ENCODE measurements at regions of chr6 and their contacts with region 1.

Region 1: GRCh38 chr6:18264219-18264922 is at the start of gene DEK:
- DNase-seq: peak; percentile 90
- H3K4me3 Mint-ChIP-seq: peak within 1 kb of the TSS; percentile 95
- H3K27ac Mint-ChIP-seq: peak within 1 kb of the TSS; percentile 96
- H3K4me1 Mint-ChIP-seq: peaks cover 49% of the 10 kb centered on the region
- H3K27me3 Mint-ChIP-seq: no peaks in the 10 kb centered on the region
- total RNA-seq, gene DEK: 180 to 182 TPM

Region 2: DNA sequence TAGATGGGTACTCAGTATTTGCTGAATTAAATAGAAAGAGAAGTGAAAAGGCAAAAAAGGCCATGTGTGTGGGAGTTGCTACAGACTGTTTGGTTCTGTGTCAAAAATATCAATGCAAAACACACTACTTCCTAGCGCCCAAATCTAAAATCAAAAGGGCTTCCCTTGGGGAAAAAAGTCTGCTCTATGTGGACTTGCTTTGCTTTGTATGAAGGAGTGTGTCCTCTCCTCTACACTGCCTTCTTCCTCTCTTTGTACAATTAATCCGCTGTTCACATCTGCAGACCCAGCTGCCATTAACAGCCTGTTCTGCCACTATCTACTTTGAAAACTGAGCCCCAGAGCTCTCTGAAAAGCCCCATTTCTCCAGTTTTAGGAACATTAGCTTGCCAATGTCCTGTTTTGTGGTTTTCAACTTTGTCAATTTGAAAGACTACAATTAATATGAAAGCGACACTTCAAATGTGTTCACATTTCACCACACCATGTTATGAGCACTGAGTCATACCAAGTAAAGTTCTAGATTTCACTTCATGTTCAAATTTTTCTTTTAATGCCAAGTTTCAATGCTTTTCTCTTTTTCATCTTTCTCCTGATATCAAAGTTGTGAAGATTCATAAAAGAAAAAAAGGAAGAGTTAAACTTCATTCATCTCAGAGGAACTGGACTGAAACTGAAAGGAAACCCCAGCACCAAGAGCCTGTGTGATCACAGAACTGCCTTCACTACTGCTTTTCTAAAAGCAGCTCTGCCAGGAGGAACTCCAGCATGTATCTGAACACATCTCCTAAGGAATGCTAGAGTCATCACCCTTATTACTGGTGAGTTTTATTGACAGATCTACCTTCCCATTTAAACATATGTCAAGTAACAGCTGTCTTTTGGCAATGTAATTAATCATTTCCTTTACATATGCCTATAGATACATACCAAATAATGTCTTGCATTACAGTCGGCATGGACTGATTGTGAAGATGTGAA is 379.6 kb before region 1 on chr6:
- CTCF ChIA-PET with region 1: no interaction called
- POLR2A ChIA-PET with region 1: no interaction called
- intact Hi-C with region 1: loop called (anchors 10 kb)
- DNase-seq: no peak
- H3K4me3 Mint-ChIP-seq: no peak overlapping the region
- H3K27ac Mint-ChIP-seq: no peak overlapping the region
- H3K4me1 Mint-ChIP-seq: peaks cover 20% of the 10 kb centered on the region
- H3K27me3 Mint-ChIP-seq: peaks cover 36% of the 10 kb centered on the region

Region 3: DNA sequence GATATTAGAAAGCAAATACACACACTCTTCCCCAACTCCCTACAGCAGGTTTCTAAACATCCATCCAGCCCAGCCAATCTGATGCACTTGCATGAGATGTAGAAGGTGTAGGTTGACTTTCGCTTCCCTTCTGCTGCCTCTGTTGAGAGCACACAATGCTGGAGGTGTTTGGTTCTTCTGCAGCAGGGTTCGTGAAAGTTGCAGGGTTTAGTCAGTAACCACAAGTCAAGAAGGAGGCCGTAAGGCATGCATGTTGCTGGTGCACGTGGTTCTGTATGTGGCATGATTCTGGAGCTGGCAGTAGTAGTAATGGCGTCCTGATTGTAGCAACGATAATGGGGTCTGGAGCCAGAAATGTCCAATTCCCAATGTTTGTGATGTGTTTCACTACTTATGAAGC is 53.0 kb before region 1 on chr6:
- CTCF ChIA-PET with region 1: no interaction called
- POLR2A ChIA-PET with region 1: no interaction called
- intact Hi-C with region 1: loop called (anchors 1 kb)
- DNase-seq: peak; percentile 63
- H3K4me3 Mint-ChIP-seq: no peak overlapping the region
- H3K27ac Mint-ChIP-seq: no peak overlapping the region
- H3K4me1 Mint-ChIP-seq: peaks cover 23% of the 10 kb centered on the region
- H3K27me3 Mint-ChIP-seq: no peaks in the 10 kb centered on the region

Region 4: GRCh38 chr6:18243302-18243893 is 21.0 kb before region 1 on chr6:
- CTCF ChIA-PET with region 1: interaction called, 3 read pairs
- POLR2A ChIA-PET with region 1: interaction called, 4 read pairs
- intact Hi-C with region 1: loop called (anchors 1 kb)
- DNase-seq: no peak
- H3K4me3 Mint-ChIP-seq: no peak overlapping the region
- H3K27ac Mint-ChIP-seq: peak overlapping the region; percentile 1
- H3K4me1 Mint-ChIP-seq: peaks cover 60% of the 10 kb centered on the region
- H3K27me3 Mint-ChIP-seq: no peaks in the 10 kb centered on the region

Region 5: DNA sequence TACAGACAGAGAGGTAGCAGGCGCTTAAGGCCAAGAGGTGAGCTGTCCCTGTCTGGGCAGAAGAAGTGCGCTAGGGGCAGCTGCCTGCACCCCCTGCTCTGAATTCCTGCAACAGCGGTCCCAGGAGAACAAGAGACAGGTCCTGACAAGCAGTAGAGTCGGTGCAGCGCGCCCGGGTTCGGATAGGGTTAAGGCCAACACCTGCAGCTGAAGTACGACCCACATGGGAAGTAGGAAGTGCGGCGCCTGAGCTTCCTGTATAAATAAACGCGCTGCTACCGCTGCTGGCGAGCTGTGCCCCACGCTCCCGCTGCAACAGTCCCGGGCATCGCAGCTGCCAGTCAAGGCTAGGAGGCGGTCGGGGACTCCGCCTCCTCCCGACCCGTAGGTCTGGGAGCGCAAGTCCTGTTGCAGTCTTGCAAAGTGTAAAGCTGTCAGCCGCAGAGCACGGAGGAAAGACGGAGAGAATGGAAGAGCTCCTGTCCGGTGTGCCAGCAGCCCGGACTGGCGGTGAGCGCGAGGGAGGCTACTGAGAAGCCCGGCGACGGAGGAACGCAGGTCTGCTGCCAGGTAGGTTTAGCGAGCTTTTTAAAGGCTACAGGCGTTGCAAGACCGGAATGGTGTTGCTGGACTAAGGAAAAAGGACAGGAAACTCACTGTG is 122.8 kb after region 1 on chr6 and contains the start of gene RNF144B:
- CTCF ChIA-PET with region 1: no interaction called
- POLR2A ChIA-PET with region 1: no interaction called
- intact Hi-C with region 1: loop called (anchors 5 kb)
- DNase-seq: peak; percentile 75
- H3K4me3 Mint-ChIP-seq: peak within 1 kb of the TSS; percentile 91
- H3K27ac Mint-ChIP-seq: peak within 1 kb of the TSS; percentile 46
- H3K4me1 Mint-ChIP-seq: peaks cover 28% of the 10 kb centered on the region
- H3K27me3 Mint-ChIP-seq: peaks cover 4% of the 10 kb centered on the region
- total RNA-seq, gene RNF144B: 2.1 to 2.9 TPM

Region 6: GRCh38 chr6:18509871-18510643 is 245.7 kb after region 1 on chr6:
- CTCF ChIA-PET with region 1: no interaction called
- POLR2A ChIA-PET with region 1: no interaction called
- intact Hi-C with region 1: loop called (anchors 5 kb)
- DNase-seq: peak; percentile 62
- H3K4me3 Mint-ChIP-seq: no peak overlapping the region
- H3K27ac Mint-ChIP-seq: peak overlapping the region; percentile 40
- H3K4me1 Mint-ChIP-seq: peaks cover 23% of the 10 kb centered on the region
- H3K27me3 Mint-ChIP-seq: peaks cover 7% of the 10 kb centered on the region